SK-N-SH (cell line): ENCODE measurements at regions of chr1 and their contacts with region 1.

Region 1: GRCh38 chr1:172002725-172003345 is 161.5 kb downstream of the DNM3 start:
- DNase-seq: peak; percentile 20
- H3K4me3 ChIP-seq: no peak overlapping the region
- H3K27ac ChIP-seq: no peak overlapping the region
- H3K4me1 ChIP-seq: peaks cover 5 to 10% of the 10 kb centered on the region in 2 experiments; a peak in 2 of 4 replicates
- H3K27me3 ChIP-seq: no peaks in the 10 kb centered on the region
- CTCF ChIP-seq: peak; percentile 93
- EP300 ChIP-seq: no peak
- RAD21 ChIP-seq: peak; percentile 90

Region 2: DNA sequence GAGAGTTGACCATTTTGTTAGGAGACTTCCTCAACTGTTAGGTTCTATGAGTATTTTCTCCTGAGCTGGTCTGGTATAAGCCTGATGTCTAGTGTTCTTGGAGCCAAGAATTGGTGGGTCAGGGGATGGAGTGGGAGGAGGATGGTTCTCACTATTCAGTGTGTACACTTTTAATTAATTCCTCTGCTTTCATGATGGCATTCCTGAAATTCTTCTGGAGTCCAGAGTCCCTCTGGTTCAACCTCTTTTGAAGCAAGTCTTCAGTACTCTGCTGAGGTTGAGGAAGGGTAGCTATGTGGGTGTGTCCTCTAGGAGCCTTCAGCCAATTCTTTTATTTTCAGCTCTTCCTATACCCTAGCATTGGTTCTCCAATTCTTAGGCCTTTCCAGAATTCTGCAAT is 12.5 kb before region 1 on chr1:
- CTCF ChIA-PET with region 1: interaction called, 34 read pairs
- POLR2A ChIA-PET with region 1: no interaction called
- DNase-seq: no peak
- H3K4me3 ChIP-seq: no peak overlapping the region
- H3K27ac ChIP-seq: no peak overlapping the region
- H3K4me1 ChIP-seq: no peaks in the 10 kb centered on the region
- H3K27me3 ChIP-seq: no peaks in the 10 kb centered on the region
- CTCF ChIP-seq: no peak
- EP300 ChIP-seq: no peak
- RAD21 ChIP-seq: no peak

Region 3: DNA sequence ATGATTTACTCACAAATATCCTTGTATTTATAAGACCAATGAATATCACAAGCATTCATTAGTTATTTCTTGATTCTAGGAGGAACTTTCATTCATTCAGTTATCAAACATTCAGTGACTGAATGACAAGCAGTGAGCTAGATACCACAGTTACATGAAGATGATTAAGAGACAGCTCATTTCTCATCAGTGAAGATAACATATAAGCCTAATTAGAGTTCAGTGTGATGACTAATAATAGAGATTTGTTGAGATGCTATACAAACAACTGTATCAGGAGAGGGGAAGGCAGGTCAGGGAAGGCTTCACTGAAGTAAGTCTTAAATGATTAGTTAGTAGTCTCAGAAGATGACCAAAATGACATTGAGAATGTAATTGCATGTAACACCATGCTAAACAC is 403.1 kb after region 1 on chr1:
- CTCF ChIA-PET with region 1: interaction called, 42 read pairs
- POLR2A ChIA-PET with region 1: no interaction called
- DNase-seq: no peak
- H3K4me3 ChIP-seq: no peak overlapping the region
- H3K27ac ChIP-seq: no peak overlapping the region
- H3K4me1 ChIP-seq: no peaks in the 10 kb centered on the region; a peak in 1 of 4 replicates
- H3K27me3 ChIP-seq: no peaks in the 10 kb centered on the region
- CTCF ChIP-seq: no peak
- EP300 ChIP-seq: no peak
- RAD21 ChIP-seq: no peak

Region 4: DNA sequence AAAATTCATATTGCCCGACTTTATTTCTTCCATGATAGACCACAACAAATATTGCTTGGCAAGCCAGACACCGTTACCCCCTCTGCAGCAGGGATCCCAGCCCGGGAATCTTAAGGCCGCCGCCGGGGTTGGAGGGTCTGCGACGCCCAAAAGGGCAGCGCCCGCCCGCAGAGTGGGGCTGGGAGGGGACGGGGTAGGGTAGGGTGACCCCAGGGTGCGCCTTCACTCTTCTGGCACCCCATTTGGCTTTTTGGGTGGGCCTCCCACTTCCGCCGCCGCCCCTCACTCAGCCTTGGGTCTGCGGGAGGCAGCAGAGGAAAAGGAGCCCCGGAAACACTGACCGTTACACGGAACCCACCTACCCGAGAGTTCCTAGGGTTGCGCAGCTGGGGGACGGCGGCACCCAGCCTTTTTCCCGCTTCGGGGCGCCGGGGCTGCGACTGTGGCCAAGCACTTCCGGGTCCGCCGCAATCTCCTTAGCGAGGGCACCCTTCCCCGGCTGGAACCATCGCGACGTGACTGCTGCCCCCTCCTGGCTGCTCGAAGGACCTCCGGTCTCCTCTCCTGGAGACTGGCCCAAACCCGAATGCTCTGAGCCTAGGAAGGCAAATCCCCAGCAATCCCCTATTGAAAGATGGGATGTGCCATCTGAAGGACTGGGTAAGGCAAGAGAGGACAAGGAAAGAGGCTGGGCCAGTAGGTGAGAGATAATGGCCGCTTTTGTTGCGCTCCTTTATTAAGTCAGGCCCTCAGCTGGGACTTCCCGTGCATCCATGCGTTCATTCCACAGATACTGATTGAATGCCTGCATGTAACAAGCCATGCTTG is 441.0 kb after region 1 on chr1 and contains the start of gene PIGC:
- CTCF ChIA-PET with region 1: interaction called, 21 read pairs
- POLR2A ChIA-PET with region 1: no interaction called
- DNase-seq: peak; percentile 92
- H3K4me3 ChIP-seq: peak within 1 kb of the TSS; percentile 89 to 99
- H3K27ac ChIP-seq: peak within 1 kb of the TSS; percentile 45 to 73; a peak in 3 of 4 replicates
- H3K4me1 ChIP-seq: peaks cover 0 to 12% of the 10 kb centered on the region in 2 experiments; a peak in 3 of 4 replicates
- H3K27me3 ChIP-seq: no peaks in the 10 kb centered on the region
- CTCF ChIP-seq: peak; percentile 86
- EP300 ChIP-seq: no peak; a peak in 1 of 4 replicates
- RAD21 ChIP-seq: peak; percentile 72
- polyA plus RNA-seq, gene PIGC: 20.6 and 31.4 TPM in 2 replicates